Naive thymus-derived CD4-positive, alpha-beta T cell (primary cell): ENCODE measurements at regions of chr12 and their contacts with region 1.

Region 1: DNA sequence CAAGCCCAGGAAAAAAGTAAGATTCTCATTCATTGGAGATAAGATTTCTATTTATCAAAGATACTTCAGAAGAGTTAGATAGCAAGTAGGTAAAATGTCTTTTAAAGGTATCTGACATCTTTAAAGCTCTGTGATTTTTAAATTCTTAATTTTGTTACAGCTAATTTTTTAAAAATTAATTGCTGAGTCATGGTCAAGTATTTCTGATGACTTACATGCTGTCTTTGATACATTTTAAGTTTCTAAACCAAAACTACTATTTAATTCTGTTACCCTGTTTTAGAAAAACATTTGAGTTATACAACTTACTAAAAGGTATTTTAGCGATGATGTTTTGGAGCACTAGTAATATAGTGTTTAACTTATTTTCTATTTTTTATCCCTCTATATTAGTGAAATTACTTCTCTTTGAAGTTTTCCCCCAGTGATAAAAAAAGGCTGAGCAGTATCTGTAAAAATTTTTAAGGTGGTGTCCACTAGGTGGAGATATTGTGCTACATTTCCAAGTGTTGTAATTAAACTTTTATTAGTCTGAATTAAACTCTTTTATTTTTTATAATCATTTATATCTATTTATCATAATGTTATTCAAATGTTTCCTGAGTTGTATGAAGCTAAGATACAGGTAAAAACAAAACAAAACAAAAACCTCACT is 11.5 kb downstream of the ALG10 start:
- DNase-seq: peak in 4 of 9 donors; percentile 22 to 35 (median 28)
- ATAC-seq: no peak
- H3K4me3 ChIP-seq: no peak overlapping the region
- H3K4me3 Mint-ChIP-seq: no peak overlapping the region
- H3K27ac ChIP-seq: no peak overlapping the region
- H3K27ac Mint-ChIP-seq: no peak overlapping the region
- H3K4me1 ChIP-seq: no peaks in the 10 kb centered on the region
- H3K4me1 Mint-ChIP-seq: peaks cover 0 to 6% (median 0%) of the 10 kb centered on the region in 7 donors
- H3K27me3 ChIP-seq: no peaks in the 10 kb centered on the region
- H3K27me3 Mint-ChIP-seq: no peaks in the 10 kb centered on the region

Region 2: GRCh38 chr12:34218165-34219045 is 184.7 kb after region 1 on chr12:
- CTCF ChIA-PET with region 1: no interaction called
- POLR2A ChIA-PET with region 1: no interaction called
- intact Hi-C with region 1: loop called in 1 of 2 experiments (anchors 1 kb)
- DNase-seq: peak; percentile 14 to 61 (median 50)
- ATAC-seq: peak; percentile 90
- H3K4me3 ChIP-seq: peak overlapping the region; percentile 47
- H3K4me3 Mint-ChIP-seq: peak overlapping the region; percentile 76 to 95 (median 89)
- H3K27ac ChIP-seq: no peak overlapping the region
- H3K27ac Mint-ChIP-seq: peak overlapping the region in 6 of 9 donors; percentile 26 to 79 (median 74)
- H3K4me1 ChIP-seq: no peaks in the 10 kb centered on the region
- H3K4me1 Mint-ChIP-seq: peaks cover 4 to 18% (median 11%) of the 10 kb centered on the region in 7 donors
- H3K27me3 ChIP-seq: peaks cover 0 to 4% of the 10 kb centered on the region in 2 donors
- H3K27me3 Mint-ChIP-seq: peaks cover 2 to 17% (median 11%) of the 10 kb centered on the region in 5 donors